Mammary epithelial cell (primary cell): ENCODE measurements at regions of chr12 and their contacts with region 1.

Region 1: DNA sequence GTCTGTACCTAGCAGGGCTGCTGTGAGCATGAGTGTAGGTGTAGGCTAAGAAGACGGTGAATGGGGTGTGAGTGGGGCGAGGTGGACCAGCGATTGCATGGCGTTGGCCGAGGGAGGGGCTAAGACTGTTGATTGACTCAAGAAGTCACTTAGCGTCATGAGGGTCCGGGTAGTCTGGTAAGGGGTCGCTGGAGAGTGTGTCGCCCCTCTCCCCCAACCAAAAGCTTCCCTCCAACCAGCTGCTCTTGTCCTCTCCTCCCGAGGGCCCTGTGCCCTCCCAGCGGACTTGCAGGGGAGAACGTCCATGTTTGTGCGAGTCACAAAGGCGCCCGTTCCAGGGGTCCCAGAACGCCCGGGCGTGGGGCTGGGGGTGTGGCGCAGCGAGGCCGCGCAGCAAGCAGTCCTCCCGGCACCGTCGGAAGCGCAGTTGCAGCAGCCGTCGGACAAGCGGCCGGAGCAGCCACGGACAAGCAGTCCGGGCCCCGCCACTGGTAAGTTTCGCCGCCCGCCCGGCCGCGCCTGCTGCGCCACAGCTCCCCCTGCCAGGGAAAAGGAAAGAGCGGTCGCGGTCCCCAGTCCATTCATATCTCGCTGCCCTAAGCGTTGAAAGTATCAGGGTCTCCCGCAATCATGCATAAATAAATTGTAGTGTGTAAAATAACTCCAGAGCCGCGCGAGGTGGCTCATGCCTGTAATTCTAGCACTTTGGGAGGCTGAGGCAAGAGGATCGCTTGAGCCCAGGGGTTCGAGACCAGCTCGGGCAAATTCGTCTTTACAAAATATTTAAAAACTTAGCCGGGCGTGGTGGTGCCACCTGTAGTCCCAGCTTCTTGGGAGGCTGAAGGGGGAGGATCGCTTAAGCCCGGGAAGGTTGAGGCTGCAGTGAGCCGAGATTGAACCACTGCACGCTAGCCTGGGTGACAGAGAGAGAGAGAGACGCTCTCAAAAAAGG is at the start of gene CCDC63:
- DNase-seq: no peak
- H3K4me3 ChIP-seq: no peak within 1 kb of the TSS
- H3K27ac ChIP-seq: no peak within 1 kb of the TSS
- H3K4me1 ChIP-seq: peaks cover 10% of the 10 kb centered on the region
- H3K27me3 ChIP-seq: no peaks in the 10 kb centered on the region
- CTCF ChIP-seq: peak in 1 of 2 donors; percentile 57
- total RNA-seq, gene CCDC63: not detected

Region 2: GRCh38 chr12:110531741-110532333 is 315.1 kb before region 1 on chr12:
- CTCF ChIA-PET with region 1: no interaction called
- dilution Hi-C with region 1: loop called (anchors 10 kb)
- in situ Hi-C with region 1: no loop called
- intact Hi-C with region 1: no loop called
- DNase-seq: peak; percentile 88
- H3K4me3 ChIP-seq: no peak overlapping the region
- H3K27ac ChIP-seq: peak overlapping the region; percentile 52
- H3K4me1 ChIP-seq: peaks cover 27% of the 10 kb centered on the region
- H3K27me3 ChIP-seq: no peaks in the 10 kb centered on the region
- CTCF ChIP-seq: no peak

Region 3: GRCh38 chr12:110627500-110628195 is 219.2 kb before region 1 on chr12:
- CTCF ChIA-PET with region 1: no interaction called
- dilution Hi-C with region 1: loop called (anchors 10 kb)
- in situ Hi-C with region 1: no loop called
- intact Hi-C with region 1: no loop called
- DNase-seq: no peak
- H3K4me3 ChIP-seq: no peak overlapping the region
- H3K27ac ChIP-seq: no peak overlapping the region
- H3K4me1 ChIP-seq: no peaks in the 10 kb centered on the region
- H3K27me3 ChIP-seq: no peaks in the 10 kb centered on the region
- CTCF ChIP-seq: no peak

Region 4: GRCh38 chr12:110802489-110802888 is 44.4 kb before region 1 on chr12:
- CTCF ChIA-PET with region 1: no interaction called
- dilution Hi-C with region 1: loop called (anchors 5 kb)
- in situ Hi-C with region 1: no loop called
- intact Hi-C with region 1: no loop called
- DNase-seq: no peak
- H3K4me3 ChIP-seq: no peak overlapping the region
- H3K27ac ChIP-seq: no peak overlapping the region
- H3K4me1 ChIP-seq: peaks cover 2% of the 10 kb centered on the region
- H3K27me3 ChIP-seq: no peaks in the 10 kb centered on the region
- CTCF ChIP-seq: no peak

Region 5: DNA sequence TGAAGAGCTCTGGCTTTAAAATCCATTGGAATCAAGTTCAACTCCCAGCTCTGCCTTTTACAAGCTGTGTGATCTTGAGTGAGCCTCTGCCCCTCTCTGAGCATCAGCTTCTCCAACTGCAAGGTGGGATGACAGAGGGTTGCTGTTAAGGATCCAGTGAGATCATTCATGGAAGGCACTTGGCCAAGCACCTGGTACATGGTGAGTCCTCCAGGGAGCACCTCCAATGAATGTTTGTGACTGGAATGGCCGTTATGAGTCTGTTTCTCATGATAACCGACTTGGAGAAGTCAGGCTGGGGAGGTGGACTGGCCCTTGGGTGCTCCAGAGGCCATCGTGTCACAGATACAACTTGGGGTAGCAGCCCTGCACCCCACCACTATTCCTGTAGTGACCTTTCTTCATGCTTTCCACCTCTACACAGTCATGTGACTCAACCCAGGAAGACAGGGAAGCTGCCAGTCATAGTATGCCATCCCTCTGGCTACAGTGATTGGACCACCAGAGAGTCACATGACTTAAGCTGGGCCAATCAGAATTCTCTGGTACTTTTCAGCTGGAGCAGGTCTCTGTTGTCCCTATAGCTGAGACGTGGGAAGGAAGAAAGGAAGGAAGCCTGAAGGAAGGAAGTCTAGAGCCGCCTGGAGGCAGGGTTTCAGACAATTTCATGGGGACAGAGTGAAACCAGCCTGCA is 220.0 kb after region 1 on chr12:
- CTCF ChIA-PET with region 1: no interaction called
- dilution Hi-C with region 1: loop called (anchors 10 kb)
- in situ Hi-C with region 1: no loop called
- intact Hi-C with region 1: no loop called
- DNase-seq: no peak
- H3K4me3 ChIP-seq: no peak overlapping the region
- H3K27ac ChIP-seq: no peak overlapping the region
- H3K4me1 ChIP-seq: peaks cover 4% of the 10 kb centered on the region
- H3K27me3 ChIP-seq: no peaks in the 10 kb centered on the region
- CTCF ChIP-seq: no peak